ENCODE measurements at regions of chr1 and their contacts with region 1.

Region 1: DNA sequence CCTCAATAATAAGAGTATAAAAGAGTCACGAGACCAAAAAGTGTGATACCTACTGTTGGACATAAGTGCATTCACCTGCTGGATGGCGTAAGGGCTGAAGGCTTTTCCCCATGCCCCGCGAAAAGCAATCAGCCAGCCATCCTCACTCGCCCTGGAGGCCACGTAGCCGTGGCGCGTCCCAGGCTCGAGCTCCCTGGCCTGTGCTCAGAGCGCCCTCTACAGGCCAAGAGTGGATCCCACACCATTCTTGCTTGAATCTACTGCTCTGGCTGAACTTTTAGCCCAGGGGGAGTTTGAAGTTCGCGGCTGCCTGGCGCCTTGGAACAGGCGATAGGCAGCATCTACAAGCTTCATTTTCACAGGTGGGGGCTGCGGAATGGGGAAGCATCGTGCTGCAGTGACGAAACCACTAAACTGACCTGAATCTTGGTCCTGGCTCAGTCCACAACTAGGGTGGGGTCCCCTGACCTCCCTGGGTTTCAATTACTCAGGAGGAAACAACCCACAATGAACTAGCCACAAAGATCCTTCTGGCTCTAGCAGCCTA is 70.3 kb upstream of the SERBP1 start:
- DNase-seq: peak; percentile 78
- ATAC-seq: peak; percentile 99
- H3K4me3 ChIP-seq: no peak overlapping the region
- H3K27ac ChIP-seq: no peak overlapping the region
- H3K4me1 ChIP-seq: peaks cover 23% of the 10 kb centered on the region
- H3K27me3 ChIP-seq: no peaks in the 10 kb centered on the region
- CTCF ChIP-seq: peak; percentile 99
- EP300 ChIP-seq: 0 out of 4 replicates have a peak, but pooled peaks of 1 of the 2 experiments have one; percentile 14
- POLR2A ChIP-seq: no peak
- RAD21 ChIP-seq: peak; percentile 96

Region 2: GRCh38 chr1:67230539-67230938 is 269.9 kb before region 1 on chr1:
- CTCF ChIA-PET with region 1: interaction called, 15 read pairs
- POLR2A ChIA-PET with region 1: no interaction called
- in situ Hi-C with region 1: no loop called
- intact Hi-C with region 1: loop called (anchors 1 kb)
- DNase-seq: no peak
- ATAC-seq: no peak
- H3K4me3 ChIP-seq: no peak overlapping the region
- H3K27ac ChIP-seq: no peak overlapping the region
- H3K4me1 ChIP-seq: no peaks in the 10 kb centered on the region
- H3K27me3 ChIP-seq: no peaks in the 10 kb centered on the region; a peak in 1 of 5 replicates
- CTCF ChIP-seq: no peak
- EP300 ChIP-seq: no peak
- POLR2A ChIP-seq: no peak
- RAD21 ChIP-seq: no peak

Region 3: GRCh38 chr1:67347688-67348472 is 152.6 kb before region 1 on chr1:
- CTCF ChIA-PET with region 1: interaction called, 42 read pairs
- POLR2A ChIA-PET with region 1: no interaction called
- in situ Hi-C with region 1: loop called (anchors 5 kb)
- intact Hi-C with region 1: loop called (anchors 1 kb)
- DNase-seq: peak; percentile 24
- ATAC-seq: peak; percentile 90
- H3K4me3 ChIP-seq: no peak overlapping the region
- H3K27ac ChIP-seq: no peak overlapping the region
- H3K4me1 ChIP-seq: no peaks in the 10 kb centered on the region
- H3K27me3 ChIP-seq: no peaks in the 10 kb centered on the region
- CTCF ChIP-seq: peak; percentile 79
- EP300 ChIP-seq: no peak
- POLR2A ChIP-seq: no peak
- RAD21 ChIP-seq: peak; percentile 45; the same call in 1 of the 2 replicates

Region 4: GRCh38 chr1:67479146-67479891 is 21.2 kb before region 1 on chr1:
- CTCF ChIA-PET with region 1: no interaction called
- POLR2A ChIA-PET with region 1: no interaction called
- in situ Hi-C with region 1: no loop called
- intact Hi-C with region 1: no loop called
- DNase-seq: no peak
- ATAC-seq: peak; percentile 33; the same call in 1 of the 3 replicates
- H3K4me3 ChIP-seq: no peak overlapping the region
- H3K27ac ChIP-seq: no peak overlapping the region
- H3K4me1 ChIP-seq: peaks cover 7% of the 10 kb centered on the region; the same call in 1 of the 2 replicates
- H3K27me3 ChIP-seq: 0 out of 5 replicates have a peak, but pooled peaks cover 0 to 6% of the 10 kb centered on the region in 2 experiments
- CTCF ChIP-seq: no peak
- EP300 ChIP-seq: no peak
- POLR2A ChIP-seq: no peak
- RAD21 ChIP-seq: no peak

Measured in HepG2 (cell line).